ENCODE measurements at regions of chr10 and their contacts with region 1.

Region 1: GRCh38 chr10:97445722-97446639 is at the starts of genes EXOSC1 and ZDHHC16:
- DNase-seq: peak; percentile 92
- H3K4me3 Mint-ChIP-seq: peak within 1 kb of the TSS; percentile 95
- H3K27ac Mint-ChIP-seq: peak within 1 kb of the TSS; percentile 69
- H3K4me1 Mint-ChIP-seq: peaks cover 34% of the 10 kb centered on the region
- H3K27me3 Mint-ChIP-seq: no peaks in the 10 kb centered on the region
- total RNA-seq, gene EXOSC1: 49.9 and 53.4 TPM in 2 replicates
- total RNA-seq, gene ZDHHC16: 41.4 and 52.9 TPM in 2 replicates

Region 2: GRCh38 chr10:97407211-97407951 is 38.6 kb before region 1 on chr10:
- intact Hi-C with region 1: loop called (anchors 1 kb)
- DNase-seq: peak; percentile 57
- H3K4me3 Mint-ChIP-seq: peak overlapping the region; percentile 13
- H3K27ac Mint-ChIP-seq: peak overlapping the region; percentile 61
- H3K4me1 Mint-ChIP-seq: peaks cover 16% of the 10 kb centered on the region
- H3K27me3 Mint-ChIP-seq: no peaks in the 10 kb centered on the region

Region 3: DNA sequence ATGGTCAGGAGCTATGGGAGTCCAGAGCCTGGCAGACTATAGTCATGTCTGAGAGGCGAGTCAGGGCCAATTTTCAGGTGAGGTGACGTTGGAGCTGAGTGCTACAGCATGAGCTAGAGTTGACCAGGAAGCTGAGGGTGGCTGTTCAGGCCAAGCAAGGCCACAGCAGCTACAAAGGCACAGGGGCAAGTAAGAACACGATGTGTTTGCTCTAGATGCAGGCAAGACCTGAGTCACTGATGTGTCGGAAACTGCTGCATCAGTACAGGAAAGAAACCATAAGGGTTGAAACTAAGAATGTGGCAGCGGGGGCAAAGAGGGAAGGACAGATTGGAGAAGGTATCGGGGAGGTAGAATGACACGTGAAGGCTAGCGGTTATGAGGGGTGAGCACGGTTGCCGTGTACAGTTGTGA is 33.1 kb before region 1 on chr10:
- intact Hi-C with region 1: loop called (anchors 1 kb)
- DNase-seq: peak; percentile 43
- H3K4me3 Mint-ChIP-seq: peak overlapping the region; percentile 53
- H3K27ac Mint-ChIP-seq: peak overlapping the region; percentile 91
- H3K4me1 Mint-ChIP-seq: peaks cover 48% of the 10 kb centered on the region
- H3K27me3 Mint-ChIP-seq: no peaks in the 10 kb centered on the region